ENCODE measurements at regions of chr9 and their contacts with region 1.

Region 1: GRCh38 chr9:68999393-69000105 is 14.4 kb downstream of the PRKACG start:
- DNase-seq: peak in 4 of 6 donors; percentile 33 to 77 (median 64)
- ATAC-seq: peak; percentile 90 to 96 (median 95)
- H3K4me3 ChIP-seq: no peak overlapping the region
- H3K27ac ChIP-seq: no peak overlapping the region
- H3K4me1 ChIP-seq: peaks cover 4 to 9% (median 4%) of the 10 kb centered on the region in 3 donors
- H3K27me3 ChIP-seq: no peaks in the 10 kb centered on the region
- CTCF ChIP-seq: peak; percentile 56 to 81 (median 70)

Region 2: GRCh38 chr9:68584189-68585033 is 415.1 kb before region 1 on chr9:
- intact Hi-C with region 1: loop called (anchors 5 to 10 kb)
- DNase-seq: peak; percentile 78 to 85 (median 84)
- ATAC-seq: peak; percentile 99 to 100 (median 100)
- H3K4me3 ChIP-seq: no peak overlapping the region
- H3K27ac ChIP-seq: no peak overlapping the region
- H3K4me1 ChIP-seq: no peaks in the 10 kb centered on the region
- H3K27me3 ChIP-seq: no peaks in the 10 kb centered on the region
- CTCF ChIP-seq: peak; percentile 97 to 100 (median 99)

Region 3: GRCh38 chr9:68704814-68705530 is 294.6 kb before region 1 on chr9 and contains the start of gene PIP5K1B:
- intact Hi-C with region 1: loop called in 1 of 3 experiments (anchors 10 kb)
- DNase-seq: peak; percentile 85 to 94 (median 88)
- ATAC-seq: peak; percentile 89 to 95 (median 94)
- H3K4me3 ChIP-seq: peak within 1 kb of the TSS; percentile 60 to 79 (median 70)
- H3K27ac ChIP-seq: peak within 1 kb of the TSS; percentile 68 to 90 (median 76)
- H3K4me1 ChIP-seq: peaks cover 0 to 2% (median 0%) of the 10 kb centered on the region in 3 donors
- H3K27me3 ChIP-seq: no peaks in the 10 kb centered on the region
- CTCF ChIP-seq: no peak
- total RNA-seq, gene PIP5K1B: 5.3 to 6.9 (median 6.4) TPM

Region 4: GRCh38 chr9:68779558-68780384 is 219.8 kb before region 1 on chr9:
- intact Hi-C with region 1: loop called in 1 of 3 experiments (anchors 10 kb)
- DNase-seq: peak; percentile 92 to 99 (median 96)
- ATAC-seq: peak; percentile 91 to 99 (median 96)
- H3K4me3 ChIP-seq: peak overlapping the region; percentile 54 to 93 (median 79)
- H3K27ac ChIP-seq: peak overlapping the region; percentile 81 to 94 (median 90)
- H3K4me1 ChIP-seq: peaks cover 26 to 48% (median 33%) of the 10 kb centered on the region in 3 donors
- H3K27me3 ChIP-seq: no peaks in the 10 kb centered on the region
- CTCF ChIP-seq: no peak